ENCODE measurements at regions of chr20 and their contacts with region 1.

Region 1: DNA sequence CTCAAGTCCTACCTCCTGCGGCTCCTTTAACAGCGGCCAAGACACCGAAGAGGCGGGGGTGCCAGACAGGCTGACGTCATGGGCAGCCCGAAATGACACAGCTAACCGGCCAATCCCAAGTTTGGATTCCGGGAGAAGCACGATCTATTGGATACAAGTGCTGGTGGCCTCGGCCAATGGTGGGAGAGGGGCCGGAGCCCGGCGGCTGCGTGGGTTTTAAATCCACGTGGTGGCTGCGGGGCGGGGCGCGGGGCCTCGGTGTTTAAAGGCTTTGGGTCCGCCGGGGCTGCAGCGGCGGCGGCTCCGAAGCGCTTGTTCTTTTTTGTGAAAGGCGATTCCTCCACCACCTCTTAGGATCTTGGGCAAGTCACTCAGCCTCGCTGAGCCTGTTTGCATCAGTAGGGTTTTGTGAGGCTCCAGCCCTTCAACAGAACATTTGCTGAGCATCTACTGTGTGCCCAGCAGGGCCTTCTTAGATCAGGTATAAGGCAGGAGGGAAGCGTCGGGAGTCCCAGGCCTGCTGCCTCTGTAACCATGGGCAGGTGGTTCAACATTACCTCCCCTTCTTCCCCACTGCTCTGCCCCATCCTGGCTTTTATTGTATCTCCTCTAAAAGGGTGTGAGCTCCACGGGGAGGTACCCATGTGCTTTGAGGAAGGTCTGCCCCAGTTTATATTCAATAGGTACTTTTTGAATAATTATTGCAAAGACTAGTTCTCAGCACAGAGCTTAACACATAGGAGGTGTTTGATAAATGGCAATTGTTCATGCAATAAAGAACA is 8.9 kb upstream of the PMEPA1 start:
- DNase-seq: peak; percentile 99 to 100
- H3K4me3 ChIP-seq: peak overlapping the region; percentile 40
- H3K4me3 Mint-ChIP-seq: peak overlapping the region; percentile 70
- H3K27ac Mint-ChIP-seq: peak overlapping the region; percentile 58
- H3K4me1 ChIP-seq: peaks cover 8% of the 10 kb centered on the region
- H3K4me1 Mint-ChIP-seq: no peaks in the 10 kb centered on the region
- H3K27me3 ChIP-seq: peaks cover 1% of the 10 kb centered on the region; the same call in 1 of the 2 replicates
- H3K27me3 Mint-ChIP-seq: peaks cover 15% of the 10 kb centered on the region
- CTCF ChIP-seq: no peak

Region 2: DNA sequence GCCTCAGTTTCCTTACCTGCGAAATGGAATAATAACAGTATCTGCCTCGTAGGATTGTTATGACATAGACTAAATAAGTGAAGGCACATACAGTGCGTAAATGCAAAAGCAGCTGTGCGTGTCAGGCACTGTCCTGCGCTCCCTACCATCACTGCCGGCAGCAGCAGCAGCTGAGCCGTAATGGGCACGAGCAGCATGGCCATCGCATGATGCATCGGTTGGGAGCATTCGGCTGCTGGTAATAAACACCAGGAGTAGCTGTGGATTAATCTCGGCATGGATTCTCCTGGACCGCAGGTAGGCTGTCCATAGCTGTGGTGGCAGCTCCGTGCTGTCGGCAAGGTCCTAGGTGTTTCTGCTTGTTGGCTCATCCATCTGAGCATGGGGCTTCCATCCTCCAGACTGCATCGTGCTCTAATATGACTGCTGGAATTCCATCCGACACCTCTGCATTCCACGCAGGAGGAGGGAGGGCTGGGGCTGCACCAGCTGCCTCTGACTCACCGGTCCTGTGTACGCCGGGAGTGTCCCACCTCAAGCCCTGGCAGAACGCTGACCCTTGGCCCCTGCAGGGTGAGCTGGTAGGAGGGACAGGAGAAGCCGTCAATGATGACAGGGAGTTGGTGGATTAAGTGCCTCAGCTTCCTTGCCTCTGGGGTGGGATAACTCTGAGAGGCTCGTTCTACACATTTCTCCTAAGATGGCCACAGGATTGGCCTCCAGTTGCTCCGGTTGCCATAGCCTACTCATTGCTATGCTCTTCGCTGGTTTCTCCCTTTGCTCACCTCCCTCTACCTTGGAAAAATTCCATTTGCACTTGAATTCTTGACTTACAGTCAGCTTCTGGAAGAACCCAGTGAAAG is 92.1 kb after region 1 on chr20:
- CTCF ChIA-PET with region 1: no interaction called
- POLR2A ChIA-PET with region 1: no interaction called
- intact Hi-C with region 1: loop called (anchors 5 kb)
- DNase-seq: peak; percentile 82 to 91
- H3K4me3 ChIP-seq: no peak overlapping the region
- H3K4me3 Mint-ChIP-seq: peak overlapping the region; percentile 13
- H3K27ac Mint-ChIP-seq: peak overlapping the region; percentile 9
- H3K4me1 ChIP-seq: peaks cover 16% of the 10 kb centered on the region
- H3K4me1 Mint-ChIP-seq: peaks cover 16% of the 10 kb centered on the region
- H3K27me3 ChIP-seq: no peaks in the 10 kb centered on the region
- H3K27me3 Mint-ChIP-seq: peaks cover 8% of the 10 kb centered on the region
- CTCF ChIP-seq: no peak